ENCODE measurements at regions of chr2 and their contacts with region 1.

Region 1: DNA sequence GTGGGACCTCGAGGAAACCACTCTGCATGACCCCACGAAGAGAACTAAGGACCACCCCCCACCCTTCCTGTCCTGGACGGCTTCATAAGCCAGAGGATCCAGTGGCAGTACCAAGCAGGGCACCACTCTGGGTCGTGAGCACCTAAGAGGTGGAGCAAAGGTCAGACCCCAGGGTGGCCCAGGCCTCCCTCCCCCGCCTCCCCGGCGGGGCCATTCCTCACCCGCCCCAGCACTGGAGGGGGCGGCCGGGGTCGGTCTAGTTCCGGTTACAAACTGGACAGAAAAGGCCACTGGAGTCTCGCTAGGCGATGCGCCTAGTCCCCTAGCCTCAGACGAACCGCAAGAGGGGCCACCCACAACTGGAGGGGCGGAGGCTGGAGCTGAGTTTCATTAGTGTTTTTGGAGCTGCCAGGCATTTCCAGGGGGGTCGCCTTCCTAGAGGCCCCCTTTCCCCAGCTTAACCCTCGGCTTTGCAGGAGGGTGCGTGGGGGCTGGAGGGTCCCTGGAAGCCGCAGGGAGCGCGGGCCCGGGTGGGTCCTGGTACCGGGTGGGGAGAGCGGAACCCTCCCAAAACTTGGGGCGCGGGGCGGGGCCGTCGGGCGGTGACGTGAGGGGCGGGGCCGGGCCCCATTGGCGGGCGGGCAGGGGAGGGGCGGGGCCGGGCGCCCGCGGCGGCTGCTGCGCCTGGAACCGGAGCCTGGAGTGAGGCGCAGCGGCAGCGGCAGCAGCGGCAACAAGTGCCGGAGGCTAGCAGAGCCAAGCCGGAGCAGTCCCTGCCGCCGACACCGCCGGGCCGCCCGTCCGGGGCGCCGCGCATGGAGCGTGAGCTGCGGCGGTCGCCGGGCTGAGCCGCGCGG is at the start of gene B3GNT2:
- DNase-seq: peak; percentile 93
- ATAC-seq: peak; percentile 89
- total RNA-seq, gene B3GNT2: 14.9 TPM

Region 2: GRCh38 chr2:61910603-61911002 is 285.0 kb before region 1 on chr2:
- intact Hi-C with region 1: loop called (anchors 5 kb)
- DNase-seq: no peak
- ATAC-seq: no peak

Region 3: GRCh38 chr2:62014102-62014501 is 181.5 kb before region 1 on chr2:
- intact Hi-C with region 1: loop called (anchors 5 kb)
- DNase-seq: peak; percentile 68
- ATAC-seq: peak; percentile 97

Region 4: DNA sequence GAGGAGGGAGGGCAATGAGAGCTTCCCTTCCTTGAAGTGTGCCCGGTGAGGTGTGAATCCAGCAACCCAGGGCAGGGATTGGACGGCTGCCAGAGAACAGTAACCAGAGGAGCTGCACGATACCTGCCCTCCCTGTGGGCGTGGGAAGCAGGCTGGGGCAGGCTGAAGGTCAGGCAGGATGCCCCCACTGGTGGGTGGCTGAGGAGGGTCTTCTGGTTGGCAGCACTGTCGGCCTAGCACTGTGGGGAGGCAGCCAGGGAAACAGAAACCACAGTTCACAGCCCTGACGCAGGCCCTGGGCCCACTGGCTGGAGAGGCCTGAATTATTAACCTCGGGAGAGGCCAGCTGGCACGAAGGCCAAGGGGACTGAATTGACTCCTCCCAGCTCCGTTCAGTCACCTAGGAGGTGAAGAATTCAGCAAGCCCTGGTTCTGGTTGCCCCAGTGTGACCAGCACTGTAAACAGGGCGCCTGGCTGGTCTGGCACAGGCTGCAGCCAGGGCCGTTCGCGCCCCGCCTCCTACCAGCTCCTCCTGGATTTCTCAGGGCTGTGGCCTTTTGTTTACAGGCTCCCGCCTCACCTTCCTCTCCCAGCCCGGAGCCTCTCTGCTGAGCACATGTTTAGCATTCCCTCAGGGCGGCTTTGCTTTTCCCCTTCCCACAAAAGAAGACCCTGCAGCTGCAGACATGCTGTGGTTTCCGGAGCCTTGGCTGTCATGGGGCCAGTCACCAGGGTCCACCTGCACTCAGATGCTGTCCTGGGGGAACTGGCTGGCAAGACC is 98.0 kb after region 1 on chr2:
- intact Hi-C with region 1: loop called (anchors 2 kb)
- DNase-seq: peak; percentile 78
- ATAC-seq: peak; percentile 74

Region 5: GRCh38 chr2:62340994-62341484 is 145.4 kb after region 1 on chr2:
- intact Hi-C with region 1: loop called (anchors 5 kb)
- DNase-seq: no peak
- ATAC-seq: peak; percentile 86

Region 6: DNA sequence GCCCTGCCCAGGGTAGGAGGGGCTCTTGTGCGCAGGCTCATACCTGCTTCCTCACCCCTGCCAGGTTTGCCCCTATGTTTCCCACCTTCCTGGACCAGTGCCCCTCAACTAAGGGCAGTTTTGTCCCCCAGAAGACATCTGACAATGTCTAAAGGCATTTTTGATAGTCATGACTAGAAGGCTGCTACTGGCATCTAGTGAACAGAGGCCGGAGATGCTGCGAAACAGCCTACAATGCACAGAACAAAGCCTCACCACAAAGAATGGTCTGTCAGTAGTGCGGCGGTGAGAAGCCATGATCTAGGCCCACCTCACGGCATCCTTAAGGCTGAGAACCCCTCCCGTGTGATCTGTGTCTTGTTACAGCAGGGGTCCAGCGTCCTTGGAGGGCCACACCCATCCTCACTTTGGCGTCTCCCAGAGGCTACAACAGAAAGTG is 214.4 kb after region 1 on chr2:
- intact Hi-C with region 1: loop called (anchors 5 kb)
- DNase-seq: no peak
- ATAC-seq: no peak

Measured in Right ventricle myocardium inferior (tissue), 1 donor.